Common myeloid progenitor, CD34-positive (primary cell): ENCODE measurements at regions of chr7 and their contacts with region 1.

Region 1: DNA sequence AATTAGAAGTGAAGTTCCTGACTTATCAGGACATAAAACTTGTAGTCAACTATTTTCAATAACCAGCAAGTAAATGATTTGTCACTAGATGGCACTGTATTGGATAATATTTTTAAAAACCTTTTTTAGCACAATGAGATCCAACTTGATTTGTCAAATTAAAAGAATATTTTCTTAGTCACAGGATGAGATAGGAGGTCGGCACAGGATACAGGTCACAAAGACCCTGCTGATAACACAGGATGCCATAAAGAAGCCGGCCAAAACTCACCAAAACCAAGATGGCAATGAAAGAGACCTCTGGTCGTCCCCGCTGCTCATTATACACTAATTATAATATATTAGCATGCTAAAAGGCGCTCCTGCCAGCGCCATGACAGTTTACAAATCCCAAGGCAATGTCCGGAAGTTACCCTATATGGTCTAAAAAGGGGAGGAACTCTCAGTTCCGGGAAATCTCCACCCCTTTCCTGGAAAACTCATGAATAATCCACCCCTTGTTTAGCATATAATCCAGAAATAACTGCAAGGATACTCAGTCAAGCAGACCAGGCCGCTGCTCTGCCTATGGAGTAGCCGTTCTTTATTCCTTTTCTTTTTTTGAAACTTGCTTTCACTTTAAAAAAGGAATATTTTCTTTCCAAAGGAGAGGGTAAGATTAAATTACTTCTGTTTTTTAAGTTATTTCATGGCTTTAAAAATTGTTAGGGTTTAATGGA is 255.7 kb upstream of the MKLN1 start:
- DNase-seq: peak in 2 of 3 donors; percentile 61 to 62
- H3K4me3 ChIP-seq: no peak overlapping the region
- H3K27ac ChIP-seq: peak overlapping the region in 1 of 2 experiments; percentile 58
- H3K4me1 ChIP-seq: peaks cover 0 to 25% (median 15%) of the 10 kb centered on the region in 4 experiments
- H3K27me3 ChIP-seq: no peaks in the 10 kb centered on the region

Region 2: DNA sequence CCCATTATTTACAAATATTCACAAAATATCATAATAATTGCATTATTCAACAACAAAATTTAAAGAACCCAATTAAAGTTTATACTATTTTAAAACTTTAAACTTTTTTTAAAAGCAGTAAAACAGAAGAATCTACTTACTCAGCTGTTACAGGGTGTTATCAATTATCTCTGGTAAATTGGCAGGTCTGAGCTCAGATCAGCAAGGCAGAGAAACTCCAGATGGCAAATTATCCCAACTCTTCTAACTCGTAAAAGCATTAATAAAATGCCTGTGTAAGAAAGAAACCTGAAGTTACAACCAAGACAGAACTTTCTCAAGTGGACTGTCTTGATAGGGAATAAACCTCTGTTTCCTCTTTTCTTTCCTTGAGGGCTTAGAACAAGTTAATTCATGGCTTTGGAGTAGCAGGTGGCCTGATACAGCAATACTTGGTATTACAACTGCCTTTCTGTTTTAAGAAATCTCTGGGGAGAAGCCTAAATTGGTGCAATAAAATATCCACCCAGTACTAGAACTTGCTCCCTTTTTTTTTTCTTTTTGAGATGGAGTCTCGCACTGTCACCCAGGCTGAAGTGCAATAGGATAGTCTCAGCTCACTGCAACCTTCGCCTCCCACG is 19.6 kb before region 1 on chr7:
- CTCF ChIA-PET with region 1: interaction called, 15 read pairs
- POLR2A ChIA-PET with region 1: no interaction called
- DNase-seq: peak in 2 of 3 donors; percentile 72 to 78
- H3K4me3 ChIP-seq: peak overlapping the region in 2 of 7 experiments; percentile 14 to 31
- H3K27ac ChIP-seq: peak overlapping the region in 1 of 2 experiments; percentile 47
- H3K4me1 ChIP-seq: peaks cover 17 to 66% (median 52%) of the 10 kb centered on the region in 4 experiments
- H3K27me3 ChIP-seq: no peaks in the 10 kb centered on the region

Region 3: GRCh38 chr7:131302876-131303707 is 231.1 kb after region 1 on chr7:
- CTCF ChIA-PET with region 1: interaction called, 13 read pairs
- POLR2A ChIA-PET with region 1: no interaction called
- DNase-seq: peak in 2 of 3 donors; percentile 11 to 18
- H3K4me3 ChIP-seq: no peak overlapping the region
- H3K27ac ChIP-seq: no peak overlapping the region
- H3K4me1 ChIP-seq: no peaks in the 10 kb centered on the region
- H3K27me3 ChIP-seq: no peaks in the 10 kb centered on the region

Region 4: GRCh38 chr7:131424219-131424822 is 352.4 kb after region 1 on chr7:
- CTCF ChIA-PET with region 1: interaction called, 10 read pairs
- POLR2A ChIA-PET with region 1: no interaction called
- DNase-seq: peak; percentile 47 to 68 (median 64)
- H3K4me3 ChIP-seq: no peak overlapping the region
- H3K27ac ChIP-seq: no peak overlapping the region
- H3K4me1 ChIP-seq: no peaks in the 10 kb centered on the region
- H3K27me3 ChIP-seq: no peaks in the 10 kb centered on the region